GM12878 (cell line): ENCODE measurements at regions of chr7 and their contacts with region 1.

Region 1: GRCh38 chr7:129367700-129368388 is 66.4 kb upstream of the STRIP2 start:
- DNase-seq: peak; percentile 57
- ATAC-seq: peak; percentile 85
- H3K4me3 ChIP-seq: peak overlapping the region; percentile 45
- H3K27ac ChIP-seq: peak overlapping the region; percentile 92
- H3K4me1 ChIP-seq: peaks cover 10% of the 10 kb centered on the region; the same call in 1 of the 2 replicates
- H3K27me3 ChIP-seq: no peaks in the 10 kb centered on the region
- CTCF ChIP-seq: peak; percentile 88 to 93 (median 88)
- EP300 ChIP-seq: 0 out of 4 replicates have a peak, but pooled peaks of 1 of the 2 experiments have one; percentile 28
- POLR2A ChIP-seq: peak; percentile 44; the same call in 1 of the 2 replicates
- RAD21 ChIP-seq: peak; percentile 85

Region 2: GRCh38 chr7:129218514-129219062 is 149.3 kb before region 1 on chr7:
- CTCF ChIA-PET with region 1: interaction called, 31 read pairs
- POLR2A ChIA-PET with region 1: no interaction called
- RAD21 ChIA-PET with region 1: interaction called, 44 read pairs
- SMC1A ChIA-PET with region 1: interaction called, 109 read pairs
- in situ Hi-C with region 1: no loop called
- intact Hi-C with region 1: loop called (anchors 2 kb)
- DNase-seq: no peak
- ATAC-seq: peak; percentile 96
- H3K4me3 ChIP-seq: no peak overlapping the region
- H3K27ac ChIP-seq: no peak overlapping the region
- H3K4me1 ChIP-seq: no peaks in the 10 kb centered on the region
- H3K27me3 ChIP-seq: no peaks in the 10 kb centered on the region
- CTCF ChIP-seq: peak; percentile 84 to 93 (median 84)
- EP300 ChIP-seq: no peak
- POLR2A ChIP-seq: no peak
- RAD21 ChIP-seq: peak; percentile 94

Region 3: DNA sequence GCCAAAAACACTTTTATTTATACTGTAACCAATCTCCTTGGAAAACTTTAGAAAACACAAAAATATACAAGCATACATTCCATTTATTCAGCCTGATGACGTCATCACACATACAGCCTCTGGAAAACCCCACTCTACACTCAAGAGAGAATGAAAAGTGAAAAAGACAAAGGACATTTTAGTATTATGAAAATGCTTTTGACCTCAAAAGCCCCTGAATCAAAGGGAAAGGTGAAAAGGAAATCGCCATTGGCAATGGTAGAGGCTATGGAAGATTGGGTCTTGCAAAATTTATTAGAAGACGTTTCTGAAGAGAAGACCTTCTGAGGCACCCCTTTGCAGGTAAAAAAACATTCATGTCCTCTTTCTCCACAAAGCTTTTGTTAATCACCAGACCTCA is 16.5 kb before region 1 on chr7:
- CTCF ChIA-PET with region 1: interaction called, 561 read pairs
- POLR2A ChIA-PET with region 1: interaction called, 4 read pairs
- RAD21 ChIA-PET with region 1: interaction called, 22 read pairs
- SMC1A ChIA-PET with region 1: interaction called, 451 read pairs
- in situ Hi-C with region 1: no loop called
- intact Hi-C with region 1: no loop called
- DNase-seq: no peak
- ATAC-seq: peak; percentile 69
- H3K4me3 ChIP-seq: no peak overlapping the region
- H3K27ac ChIP-seq: no peak overlapping the region
- H3K4me1 ChIP-seq: peaks cover 8% of the 10 kb centered on the region
- H3K27me3 ChIP-seq: no peaks in the 10 kb centered on the region
- CTCF ChIP-seq: no peak
- EP300 ChIP-seq: no peak
- POLR2A ChIP-seq: no peak
- RAD21 ChIP-seq: no peak

Region 4: GRCh38 chr7:129433847-129434674 is 66.2 kb after region 1 on chr7 and contains the start of gene STRIP2:
- CTCF ChIA-PET with region 1: interaction called, 15 read pairs
- POLR2A ChIA-PET with region 1: interaction called, 5 read pairs
- RAD21 ChIA-PET with region 1: interaction called, 15 read pairs
- SMC1A ChIA-PET with region 1: interaction called, 12 read pairs
- in situ Hi-C with region 1: no loop called
- intact Hi-C with region 1: loop called (anchors 1 kb)
- DNase-seq: peak; percentile 40
- ATAC-seq: peak; percentile 98
- H3K4me3 ChIP-seq: peak within 1 kb of the TSS; percentile 95
- H3K27ac ChIP-seq: peak within 1 kb of the TSS; percentile 9; the same call in 1 of the 2 replicates
- H3K4me1 ChIP-seq: no peaks in the 10 kb centered on the region
- H3K27me3 ChIP-seq: no peaks in the 10 kb centered on the region
- CTCF ChIP-seq: 0 out of 6 replicates have a peak, but pooled peaks of 1 of the 3 experiments have one; percentile 3
- EP300 ChIP-seq: no peak
- POLR2A ChIP-seq: peak; percentile 83
- RAD21 ChIP-seq: no peak
- polyA plus RNA-seq, gene STRIP2: 0.48 to 0.58 TPM

Region 5: GRCh38 chr7:129611246-129612111 is 243.6 kb after region 1 on chr7 and contains the start of gene NRF1:
- CTCF ChIA-PET with region 1: interaction called, 14 read pairs
- POLR2A ChIA-PET with region 1: interaction called, 3 read pairs
- RAD21 ChIA-PET with region 1: interaction called, 13 read pairs
- SMC1A ChIA-PET with region 1: interaction called, 8 read pairs
- in situ Hi-C with region 1: no loop called
- intact Hi-C with region 1: no loop called
- DNase-seq: peak; percentile 57
- ATAC-seq: peak; percentile 87
- H3K4me3 ChIP-seq: peak within 1 kb of the TSS; percentile 96
- H3K27ac ChIP-seq: peak within 1 kb of the TSS; percentile 91
- H3K4me1 ChIP-seq: peaks cover 23% of the 10 kb centered on the region
- H3K27me3 ChIP-seq: no peaks in the 10 kb centered on the region
- CTCF ChIP-seq: peak in 1 of 3 experiments; percentile 15; a peak in 2 of 6 replicates
- EP300 ChIP-seq: no peak
- POLR2A ChIP-seq: peak; percentile 96
- RAD21 ChIP-seq: no peak
- polyA plus RNA-seq, gene NRF1: 3.5 TPM

Region 6: GRCh38 chr7:129825496-129826267 is 457.8 kb after region 1 on chr7:
- CTCF ChIA-PET with region 1: interaction called, 25 read pairs
- POLR2A ChIA-PET with region 1: interaction called, 4 read pairs
- RAD21 ChIA-PET with region 1: interaction called, 3 read pairs
- SMC1A ChIA-PET with region 1: interaction called, 6 read pairs
- in situ Hi-C with region 1: loop called (anchors 10 kb)
- intact Hi-C with region 1: loop called (anchors 5 kb)
- DNase-seq: no peak
- ATAC-seq: peak; percentile 88
- H3K4me3 ChIP-seq: peak overlapping the region; percentile 79
- H3K27ac ChIP-seq: no peak overlapping the region
- H3K4me1 ChIP-seq: peaks cover 4% of the 10 kb centered on the region
- H3K27me3 ChIP-seq: no peaks in the 10 kb centered on the region
- CTCF ChIP-seq: peak; percentile 37 to 72 (median 70); a peak in 4 of 6 replicates
- EP300 ChIP-seq: no peak
- POLR2A ChIP-seq: peak; percentile 61; the same call in 1 of the 2 replicates
- RAD21 ChIP-seq: peak; percentile 77